GM12878 (cell line): ENCODE measurements at regions of chr2 and their contacts with region 1.

Region 1: GRCh38 chr2:236536727-236537398 is 32.8 kb upstream of the ACKR3 start:
- DNase-seq: peak; percentile 53
- ATAC-seq: peak; percentile 77
- H3K4me3 ChIP-seq: peak overlapping the region; percentile 55
- H3K27ac ChIP-seq: peak overlapping the region; percentile 82
- H3K4me1 ChIP-seq: peaks cover 22% of the 10 kb centered on the region
- H3K27me3 ChIP-seq: no peaks in the 10 kb centered on the region
- CTCF ChIP-seq: peak in 1 of 3 experiments; percentile 12; a peak in 1 of 6 replicates
- EP300 ChIP-seq: peak; percentile 61 to 87; a peak in 2 of 4 replicates
- POLR2A ChIP-seq: 0 out of 2 replicates have a peak, but pooled peaks have one; percentile 33
- RAD21 ChIP-seq: no peak

Region 2: GRCh38 chr2:236551471-236552211 is 14.8 kb after region 1 on chr2:
- CTCF ChIA-PET with region 1: interaction called, 12 read pairs
- POLR2A ChIA-PET with region 1: interaction called, 31 read pairs
- RAD21 ChIA-PET with region 1: interaction called, 49 read pairs
- SMC1A ChIA-PET with region 1: interaction called, 59 read pairs
- in situ Hi-C with region 1: no loop called
- intact Hi-C with region 1: no loop called
- DNase-seq: peak; percentile 70
- ATAC-seq: peak; percentile 79
- H3K4me3 ChIP-seq: no peak overlapping the region; the same call in 1 of the 2 replicates
- H3K27ac ChIP-seq: peak overlapping the region; percentile 91
- H3K4me1 ChIP-seq: peaks cover 77% of the 10 kb centered on the region
- H3K27me3 ChIP-seq: no peaks in the 10 kb centered on the region
- CTCF ChIP-seq: no peak
- EP300 ChIP-seq: peak; percentile 30 to 42; a peak in 2 of 4 replicates
- POLR2A ChIP-seq: peak; percentile 65
- RAD21 ChIP-seq: no peak

Region 3: GRCh38 chr2:236558993-236559978 is 22.4 kb after region 1 on chr2:
- CTCF ChIA-PET with region 1: interaction called, 20 read pairs
- POLR2A ChIA-PET with region 1: interaction called, 14 read pairs
- RAD21 ChIA-PET with region 1: interaction called, 24 read pairs
- SMC1A ChIA-PET with region 1: interaction called, 43 read pairs
- in situ Hi-C with region 1: no loop called
- intact Hi-C with region 1: no loop called
- DNase-seq: no peak
- ATAC-seq: peak; percentile 86
- H3K4me3 ChIP-seq: no peak overlapping the region
- H3K27ac ChIP-seq: peak overlapping the region; percentile 74
- H3K4me1 ChIP-seq: peaks cover 29% of the 10 kb centered on the region
- H3K27me3 ChIP-seq: no peaks in the 10 kb centered on the region
- CTCF ChIP-seq: no peak
- EP300 ChIP-seq: peak; percentile 81 to 85; a peak in 3 of 4 replicates
- POLR2A ChIP-seq: no peak
- RAD21 ChIP-seq: 0 out of 2 replicates have a peak, but pooled peaks have one; percentile 6